Left cardiac atrium (tissue), 4 donors: ENCODE measurements at regions of chr1 and their contacts with region 1.

Region 1: GRCh38 chr1:181189691-181190363 is 101.3 kb downstream of the IER5 start:
- DNase-seq: peak; percentile 57
- ATAC-seq: peak; percentile 87 to 91

Region 2: DNA sequence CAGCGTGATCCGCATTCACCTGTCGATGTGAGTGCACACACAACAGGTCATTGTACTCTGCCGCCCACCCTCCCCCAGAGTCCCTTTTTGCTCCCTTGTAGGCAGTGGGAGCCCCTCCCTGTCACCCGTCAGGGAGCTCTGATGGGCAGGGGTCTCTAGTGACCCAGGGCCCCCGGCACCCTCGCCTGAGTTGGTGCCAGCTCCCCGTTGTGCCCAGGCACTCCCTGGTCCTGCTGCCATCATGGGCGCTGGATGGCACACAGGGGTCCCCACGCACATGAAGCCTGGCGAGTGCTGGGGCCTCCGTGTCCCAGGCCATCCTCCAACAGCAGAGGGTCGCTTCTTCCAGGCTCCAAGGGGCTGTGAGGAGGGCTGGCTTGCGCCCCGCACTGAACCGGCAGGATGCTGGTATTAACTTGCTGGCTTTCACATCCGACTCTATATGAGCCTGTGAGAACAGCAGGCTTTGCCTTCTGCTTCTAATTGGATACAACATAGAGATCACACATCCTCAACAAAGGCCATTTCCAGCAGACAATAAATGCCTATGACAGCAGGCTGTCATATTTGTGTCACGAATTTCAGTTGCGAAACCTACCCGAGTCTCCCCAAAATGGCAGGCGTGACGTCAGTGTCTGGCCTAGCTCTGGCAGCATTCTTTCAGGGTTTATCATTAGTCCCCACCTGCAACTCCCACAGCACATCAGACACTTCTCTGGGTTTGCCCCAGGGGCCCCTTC is 241.8 kb before region 1 on chr1:
- intact Hi-C with region 1: no loop called
- DNase-seq: no peak
- ATAC-seq: no peak

Region 3: DNA sequence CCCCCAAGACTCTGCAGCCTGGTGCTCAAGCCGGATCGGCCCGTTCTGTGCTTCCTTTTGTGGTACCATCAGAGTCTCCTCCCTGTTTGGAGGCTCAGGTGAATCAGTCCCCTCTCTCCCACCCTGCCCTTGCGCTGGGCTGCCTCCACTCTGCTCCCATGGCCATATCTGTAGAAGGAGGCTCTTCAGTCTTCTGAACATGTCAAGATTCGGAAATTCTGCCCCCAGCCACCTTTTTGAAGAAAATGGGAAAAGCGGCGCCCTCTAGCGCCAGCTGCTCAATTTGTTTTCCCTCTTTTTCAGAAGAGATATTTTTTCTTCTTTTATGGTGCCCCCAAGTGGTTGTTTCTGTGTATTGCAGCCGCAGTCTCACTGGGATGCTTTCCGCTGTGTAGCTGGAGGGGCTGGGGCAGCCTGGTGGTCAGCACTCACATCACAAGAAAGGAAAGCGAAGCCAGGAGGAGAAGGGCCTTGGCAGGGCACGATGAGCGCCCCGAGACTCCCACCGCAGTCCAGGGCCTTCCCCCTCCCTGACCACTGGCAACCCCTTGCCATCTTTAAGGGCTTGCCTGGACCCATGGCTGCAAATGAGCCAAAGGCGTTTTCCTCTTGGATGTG is 235.1 kb after region 1 on chr1:
- intact Hi-C with region 1: loop called (anchors 2 kb)
- DNase-seq: peak; percentile 66
- ATAC-seq: peak; percentile 20 to 48